ENCODE measurements at regions of chr7 and their contacts with region 1.

Region 1: DNA sequence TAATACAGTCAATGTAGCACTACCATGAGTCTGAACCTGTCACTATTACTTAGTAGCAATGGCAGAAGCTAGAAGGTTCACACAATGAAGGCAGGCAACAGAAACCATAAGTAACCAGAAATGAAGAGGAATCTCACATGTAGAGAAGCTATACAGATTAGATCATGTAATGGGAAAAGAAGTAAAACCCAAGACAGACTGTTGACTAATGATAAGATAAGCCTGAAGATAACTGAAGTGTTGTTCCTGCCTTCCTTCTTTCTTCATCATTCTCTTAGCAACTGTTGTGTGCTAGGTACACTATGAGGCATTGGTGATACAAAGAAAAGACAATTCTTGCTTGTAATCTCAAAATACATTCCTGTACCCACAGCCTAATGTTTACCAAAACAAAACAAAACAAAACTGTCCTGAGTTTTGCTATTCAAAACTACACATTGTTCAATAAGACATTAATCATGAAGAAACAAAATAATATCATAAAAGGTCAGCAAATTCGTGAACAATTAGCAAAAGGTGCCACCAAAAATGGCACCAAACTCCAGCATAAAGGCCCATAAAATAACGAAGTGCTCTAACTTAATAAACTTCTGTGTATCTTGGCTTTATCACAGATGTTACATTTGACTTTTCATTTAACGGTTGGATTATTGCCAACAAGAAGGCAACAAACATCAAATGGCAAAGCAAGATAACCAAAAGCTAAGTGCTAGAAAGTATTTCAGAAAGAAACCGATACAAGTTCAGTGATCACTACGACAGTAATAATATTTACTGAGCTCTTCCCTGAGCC is 27.1 kb downstream of the ZNF800 start:
- DNase-seq: no peak
- H3K4me3 ChIP-seq: no peak overlapping the region
- CTCF ChIP-seq: no peak

Region 2: DNA sequence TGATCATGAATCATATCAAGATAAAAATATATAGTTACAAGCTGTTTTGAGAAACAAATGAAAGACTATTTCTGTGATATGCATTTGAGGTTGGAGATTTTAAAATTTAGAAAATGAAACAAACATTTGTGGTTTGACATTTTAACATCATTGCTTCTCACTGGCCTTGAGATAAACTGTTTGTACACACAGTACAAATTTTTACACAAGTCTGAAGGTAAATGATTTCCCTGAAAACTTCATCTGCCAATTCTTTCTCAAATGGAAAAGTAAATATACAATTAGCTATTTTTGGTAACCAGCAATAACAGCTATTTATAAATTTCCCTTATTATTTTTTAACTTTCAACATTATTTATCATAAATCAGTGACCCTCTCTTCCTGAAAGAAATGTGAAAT is 11.5 kb before region 1 on chr7:
- CTCF ChIA-PET with region 1: interaction called, 11 read pairs
- POLR2A ChIA-PET with region 1: no interaction called
- DNase-seq: no peak
- H3K4me3 ChIP-seq: no peak overlapping the region
- CTCF ChIP-seq: no peak

Measured in AG04449 (cell line).